Posterior vena cava (tissue), 2 donors: ENCODE measurements at regions of chr14 and their contacts with region 1.

Region 1: GRCh38 chr14:103688906-103689902 is 26.0 kb downstream of the XRCC3 start:
- DNase-seq: peak; percentile 84

Region 2: DNA sequence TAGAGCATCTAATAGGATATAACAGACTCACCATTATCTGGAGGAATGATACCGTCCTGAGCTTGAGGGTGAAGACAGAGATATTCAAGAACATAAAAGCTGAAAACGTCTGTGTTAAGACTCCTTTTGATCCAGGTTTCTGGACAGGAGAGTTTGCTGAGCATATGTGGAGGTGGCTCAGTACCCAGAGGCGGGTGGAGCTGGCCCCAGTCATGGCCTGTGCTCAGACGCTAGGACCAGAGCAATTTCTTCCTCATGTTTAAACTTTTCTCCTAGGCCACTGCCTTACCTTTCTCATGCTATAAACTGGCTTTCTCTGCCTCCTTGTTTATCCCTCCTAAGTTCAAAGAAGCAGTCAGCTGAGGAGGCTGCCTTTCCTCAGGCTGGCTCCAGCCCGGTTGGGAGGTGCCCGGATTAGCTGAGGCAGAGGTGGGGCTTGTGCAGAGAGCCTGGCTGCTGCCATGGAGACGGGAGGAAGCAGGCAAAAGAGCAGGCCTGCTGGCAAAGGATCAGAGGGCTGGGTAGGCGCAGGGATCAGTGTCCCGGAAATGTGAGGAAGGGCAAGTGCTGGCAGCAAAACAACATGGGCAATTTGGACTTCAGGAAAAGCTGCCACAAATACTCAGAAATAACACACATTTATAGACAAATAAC is 112.7 kb before region 1 on chr14:
- intact Hi-C with region 1: loop called in 1 of 2 experiments (anchors 10 kb)
- DNase-seq: peak; percentile 95